ENCODE measurements at regions of chr22 and their contacts with region 1.

Region 1: GRCh38 chr22:31230871-31231621 is 18.9 kb downstream of the LIMK2 start:
- DNase-seq: peak; percentile 69 to 81 (median 75)
- H3K4me3 ChIP-seq: peak overlapping the region in 1 of 3 experiments; percentile 29
- H3K4me3 Mint-ChIP-seq: peak overlapping the region in 1 of 2 donors; percentile 61
- H3K27ac ChIP-seq: peak overlapping the region; percentile 96
- H3K27ac Mint-ChIP-seq: peak overlapping the region; percentile 94 to 99 (median 99)
- H3K4me1 ChIP-seq: peaks cover 83 to 89% of the 10 kb centered on the region in 2 donors
- H3K4me1 Mint-ChIP-seq: peaks cover 83% of the 10 kb centered on the region
- H3K27me3 ChIP-seq: no peaks in the 10 kb centered on the region
- H3K27me3 Mint-ChIP-seq: peaks cover 0 to 2% (median 0%) of the 10 kb centered on the region in 3 donors
- CTCF ChIP-seq: peak; percentile 90

Region 2: GRCh38 chr22:31107178-31107893 is 123.7 kb before region 1 on chr22 and contains the start of gene SELENOM:
- intact Hi-C with region 1: loop called (anchors 5 to 10 kb)
- DNase-seq: peak; percentile 91 to 94 (median 93)
- H3K4me3 ChIP-seq: peak within 1 kb of the TSS; percentile 14 to 60 (median 37)
- H3K4me3 Mint-ChIP-seq: peak within 1 kb of the TSS; percentile 85 to 93
- H3K27ac ChIP-seq: peak within 1 kb of the TSS in 1 of 2 donors; percentile 9
- H3K27ac Mint-ChIP-seq: peak within 1 kb of the TSS; percentile 70 to 88 (median 81)
- H3K4me1 ChIP-seq: peaks cover 12 to 14% of the 10 kb centered on the region in 2 donors
- H3K4me1 Mint-ChIP-seq: peaks cover 11% of the 10 kb centered on the region
- H3K27me3 ChIP-seq: peaks cover 0 to 2% of the 10 kb centered on the region in 2 donors
- H3K27me3 Mint-ChIP-seq: peaks cover 3 to 20% (median 18%) of the 10 kb centered on the region in 3 donors
- CTCF ChIP-seq: peak; percentile 80
- polyA plus RNA-seq, gene SELENOM: 3.2 to 7.6 (median 3.4) TPM

Region 3: DNA sequence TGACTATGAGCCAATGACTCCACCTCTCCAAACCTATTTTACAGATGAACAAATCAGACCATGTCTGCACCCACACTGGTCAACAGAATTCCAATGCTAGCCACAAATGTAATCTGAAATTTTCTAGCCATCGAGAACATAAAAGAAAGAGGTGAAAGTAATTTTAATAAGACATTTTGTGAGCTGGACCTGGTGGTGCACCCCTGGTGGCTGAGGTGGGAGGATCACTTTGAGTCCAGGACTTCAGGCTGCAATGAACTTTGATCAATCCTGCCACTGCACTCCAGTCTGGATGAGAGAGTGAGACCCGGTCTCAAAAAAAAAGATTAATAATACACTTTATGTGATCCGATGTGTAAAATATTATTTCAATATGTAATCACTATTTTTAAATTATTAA is 80.4 kb before region 1 on chr22:
- intact Hi-C with region 1: loop called in 1 of 2 experiments (anchors 10 kb)
- DNase-seq: no peak
- H3K4me3 ChIP-seq: no peak overlapping the region
- H3K4me3 Mint-ChIP-seq: no peak overlapping the region
- H3K27ac ChIP-seq: no peak overlapping the region
- H3K27ac Mint-ChIP-seq: no peak overlapping the region
- H3K4me1 ChIP-seq: no peaks in the 10 kb centered on the region
- H3K4me1 Mint-ChIP-seq: peaks cover 6% of the 10 kb centered on the region
- H3K27me3 ChIP-seq: peaks cover 0 to 2% of the 10 kb centered on the region in 2 donors
- H3K27me3 Mint-ChIP-seq: peaks cover 4 to 6% (median 6%) of the 10 kb centered on the region in 3 donors
- CTCF ChIP-seq: peak; percentile 16

Region 4: DNA sequence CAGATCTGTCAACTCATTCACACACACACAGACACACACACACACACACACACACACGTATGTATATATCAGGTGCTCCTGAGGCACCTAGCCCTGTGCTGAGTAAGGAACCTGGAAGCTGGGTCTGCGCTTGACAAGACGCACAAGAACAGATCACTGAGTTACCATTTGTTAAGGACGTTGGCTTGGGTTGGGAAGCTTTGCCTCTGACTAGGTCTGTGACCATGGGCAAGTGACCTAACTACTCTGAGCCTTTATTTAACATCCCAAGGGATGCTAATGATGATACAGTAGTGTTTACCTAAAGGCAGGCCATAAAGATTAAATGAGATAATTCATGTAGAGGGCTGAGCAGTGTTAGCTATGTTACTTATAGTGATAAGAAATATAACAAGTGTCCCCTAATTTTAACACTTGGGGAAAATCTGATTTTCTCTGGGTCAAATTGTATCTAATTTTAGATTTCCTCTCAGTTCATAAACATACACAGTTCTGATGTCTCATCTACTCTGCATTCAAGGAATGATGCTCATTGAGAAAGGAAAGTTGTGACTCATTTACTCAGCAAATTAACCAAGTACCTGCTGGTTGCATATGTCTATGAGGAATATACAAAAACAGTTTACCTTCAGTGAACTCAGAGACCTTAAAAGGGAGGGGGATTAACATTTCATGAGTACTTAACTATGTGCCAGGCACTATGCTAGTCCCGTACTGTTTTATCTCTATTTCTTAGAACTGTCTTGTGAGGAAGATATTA is 57.5 kb before region 1 on chr22:
- intact Hi-C with region 1: loop called in 1 of 2 experiments (anchors 5 kb)
- DNase-seq: peak in 1 of 3 donors; percentile 27
- H3K4me3 ChIP-seq: no peak overlapping the region
- H3K4me3 Mint-ChIP-seq: no peak overlapping the region
- H3K27ac ChIP-seq: peak overlapping the region in 1 of 2 donors; percentile 75
- H3K27ac Mint-ChIP-seq: peak overlapping the region in 5 of 7 donors; percentile 15 to 66 (median 40)
- H3K4me1 ChIP-seq: peaks cover 15 to 23% of the 10 kb centered on the region in 2 donors
- H3K4me1 Mint-ChIP-seq: peaks cover 24% of the 10 kb centered on the region
- H3K27me3 ChIP-seq: no peaks in the 10 kb centered on the region
- H3K27me3 Mint-ChIP-seq: no peaks in the 10 kb centered on the region
- CTCF ChIP-seq: no peak

Region 5: GRCh38 chr22:31211862-31212730 is 18.9 kb before region 1 on chr22 and contains the start of gene LIMK2:
- intact Hi-C with region 1: loop called (anchors 2 kb)
- DNase-seq: peak; percentile 80 to 89 (median 88)
- H3K4me3 ChIP-seq: peak within 1 kb of the TSS; percentile 71 to 97 (median 94)
- H3K4me3 Mint-ChIP-seq: peak within 1 kb of the TSS; percentile 91 to 93
- H3K27ac ChIP-seq: peak within 1 kb of the TSS; percentile 76 to 92
- H3K27ac Mint-ChIP-seq: peak within 1 kb of the TSS; percentile 86 to 97 (median 93)
- H3K4me1 ChIP-seq: peaks cover 61 to 69% of the 10 kb centered on the region in 2 donors
- H3K4me1 Mint-ChIP-seq: peaks cover 62% of the 10 kb centered on the region
- H3K27me3 ChIP-seq: no peaks in the 10 kb centered on the region
- H3K27me3 Mint-ChIP-seq: peaks cover 0 to 6% (median 0%) of the 10 kb centered on the region in 3 donors
- CTCF ChIP-seq: peak; percentile 84
- polyA plus RNA-seq, gene LIMK2: 5.5 to 14.2 (median 10.1) TPM

Region 6: GRCh38 chr22:31290494-31291471 is 59.7 kb after region 1 on chr22:
- intact Hi-C with region 1: loop called in 1 of 2 experiments (anchors 5 kb)
- DNase-seq: peak; percentile 86 to 93 (median 91)
- H3K4me3 ChIP-seq: peak overlapping the region; percentile 68 to 96 (median 94)
- H3K4me3 Mint-ChIP-seq: peak overlapping the region; percentile 92 to 97
- H3K27ac ChIP-seq: peak overlapping the region; percentile 96 to 99
- H3K27ac Mint-ChIP-seq: peak overlapping the region; percentile 99 to 100 (median 99)
- H3K4me1 ChIP-seq: peaks cover 74 to 92% of the 10 kb centered on the region in 2 donors
- H3K4me1 Mint-ChIP-seq: peaks cover 67% of the 10 kb centered on the region
- H3K27me3 ChIP-seq: no peaks in the 10 kb centered on the region
- H3K27me3 Mint-ChIP-seq: peaks cover 0 to 5% (median 3%) of the 10 kb centered on the region in 3 donors
- CTCF ChIP-seq: no peak